Breast epithelium (tissue), 4 donors: ENCODE measurements at regions of chr9 and their contacts with region 1.

Region 1: GRCh38 chr9:118183571-118183970 is 479.4 kb downstream of the TLR4 start:
- DNase-seq: no peak
- H3K4me3 ChIP-seq: no peak overlapping the region
- H3K27ac ChIP-seq: no peak overlapping the region
- H3K4me1 ChIP-seq: no peaks in the 10 kb centered on the region
- H3K27me3 ChIP-seq: no peaks in the 10 kb centered on the region
- CTCF ChIP-seq: no peak
- POLR2A ChIP-seq: no peak

Region 2: GRCh38 chr9:117687532-117687931 is 496.0 kb before region 1 on chr9:
- intact Hi-C with region 1: loop called (anchors 5 kb)
- DNase-seq: no peak
- H3K4me3 ChIP-seq: no peak overlapping the region
- H3K27ac ChIP-seq: no peak overlapping the region
- H3K4me1 ChIP-seq: no peaks in the 10 kb centered on the region
- H3K27me3 ChIP-seq: no peaks in the 10 kb centered on the region
- CTCF ChIP-seq: no peak
- POLR2A ChIP-seq: no peak

Region 3: DNA sequence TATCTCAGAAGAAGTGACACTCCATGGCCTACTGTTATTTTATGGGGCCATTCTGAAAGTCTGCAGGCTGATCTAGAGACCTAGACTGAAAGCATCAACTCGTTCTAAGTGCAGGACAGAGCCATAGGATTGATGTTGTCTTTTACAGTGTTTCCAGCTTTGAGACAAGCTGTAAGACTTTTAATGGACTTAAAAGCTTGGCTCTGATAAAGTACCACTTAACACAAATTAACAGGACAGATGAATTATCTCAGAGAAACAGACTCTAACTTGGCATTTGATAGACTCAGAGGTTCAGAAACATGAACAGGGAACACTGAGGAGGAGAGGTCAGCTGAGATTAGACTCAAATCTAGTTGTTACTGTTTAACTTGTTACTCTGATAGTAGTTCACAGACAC is 276.2 kb before region 1 on chr9:
- intact Hi-C with region 1: no loop called
- DNase-seq: no peak
- H3K4me3 ChIP-seq: no peak overlapping the region
- H3K27ac ChIP-seq: no peak overlapping the region
- H3K4me1 ChIP-seq: no peaks in the 10 kb centered on the region
- H3K27me3 ChIP-seq: no peaks in the 10 kb centered on the region
- CTCF ChIP-seq: no peak
- POLR2A ChIP-seq: no peak

Region 4: GRCh38 chr9:118238139-118238538 is 54.6 kb after region 1 on chr9:
- intact Hi-C with region 1: no loop called
- DNase-seq: no peak
- H3K4me3 ChIP-seq: no peak overlapping the region
- H3K27ac ChIP-seq: no peak overlapping the region
- H3K4me1 ChIP-seq: no peaks in the 10 kb centered on the region
- H3K27me3 ChIP-seq: no peaks in the 10 kb centered on the region
- CTCF ChIP-seq: no peak
- POLR2A ChIP-seq: no peak